Head of caudate nucleus (tissue), 42 donors: ENCODE measurements at regions of chr3 and their contacts with region 1.

Region 1: GRCh38 chr3:159266779-159267178 is 464.9 kb downstream of the MFSD1 start:
- DNase-seq: peak in 22 of 42 donors; percentile 4 to 70 (median 40)

Region 2: GRCh38 chr3:159443266-159443665 is 176.5 kb after region 1 on chr3:
- intact Hi-C with region 1: no loop called
- DNase-seq: no peak

Region 3: DNA sequence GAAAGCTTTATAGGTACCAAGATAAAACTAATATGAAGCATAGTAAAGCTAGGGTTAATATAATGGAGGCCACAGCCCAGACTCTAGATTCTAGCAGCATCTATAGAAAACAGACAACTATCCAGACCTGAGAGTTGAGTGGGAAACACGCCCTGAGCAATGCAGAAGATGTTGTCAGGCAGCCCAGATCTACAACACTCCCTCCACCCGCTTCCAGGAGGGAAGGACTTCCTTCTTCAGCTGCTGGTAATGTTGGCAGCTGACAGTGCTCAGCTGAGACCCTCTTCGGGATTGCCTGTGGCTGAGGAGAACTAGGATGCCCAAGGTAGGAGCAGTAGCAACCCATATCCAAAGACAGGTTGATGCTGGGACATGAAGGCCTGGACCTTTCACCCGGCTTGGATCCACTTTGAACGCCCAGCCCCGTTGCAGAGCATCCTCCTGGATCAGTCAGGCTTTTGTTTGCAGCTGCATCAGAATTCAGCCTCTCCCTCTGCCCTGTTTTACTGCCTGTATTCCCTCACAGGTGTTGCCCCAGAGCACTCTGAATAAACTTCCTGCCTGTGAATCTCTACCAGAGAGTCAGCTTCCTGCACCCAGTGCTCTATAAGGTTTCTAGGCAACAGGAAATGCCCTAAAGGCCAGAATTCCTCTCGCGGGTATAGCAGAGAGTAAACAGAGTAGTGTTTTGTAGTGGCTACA is 547.2 kb after region 1 on chr3:
- intact Hi-C with region 1: loop called (anchors 5 kb)
- DNase-seq: no peak